PC-3 (cell line): ENCODE measurements at regions of chr12 and their contacts with region 1.

Region 1: DNA sequence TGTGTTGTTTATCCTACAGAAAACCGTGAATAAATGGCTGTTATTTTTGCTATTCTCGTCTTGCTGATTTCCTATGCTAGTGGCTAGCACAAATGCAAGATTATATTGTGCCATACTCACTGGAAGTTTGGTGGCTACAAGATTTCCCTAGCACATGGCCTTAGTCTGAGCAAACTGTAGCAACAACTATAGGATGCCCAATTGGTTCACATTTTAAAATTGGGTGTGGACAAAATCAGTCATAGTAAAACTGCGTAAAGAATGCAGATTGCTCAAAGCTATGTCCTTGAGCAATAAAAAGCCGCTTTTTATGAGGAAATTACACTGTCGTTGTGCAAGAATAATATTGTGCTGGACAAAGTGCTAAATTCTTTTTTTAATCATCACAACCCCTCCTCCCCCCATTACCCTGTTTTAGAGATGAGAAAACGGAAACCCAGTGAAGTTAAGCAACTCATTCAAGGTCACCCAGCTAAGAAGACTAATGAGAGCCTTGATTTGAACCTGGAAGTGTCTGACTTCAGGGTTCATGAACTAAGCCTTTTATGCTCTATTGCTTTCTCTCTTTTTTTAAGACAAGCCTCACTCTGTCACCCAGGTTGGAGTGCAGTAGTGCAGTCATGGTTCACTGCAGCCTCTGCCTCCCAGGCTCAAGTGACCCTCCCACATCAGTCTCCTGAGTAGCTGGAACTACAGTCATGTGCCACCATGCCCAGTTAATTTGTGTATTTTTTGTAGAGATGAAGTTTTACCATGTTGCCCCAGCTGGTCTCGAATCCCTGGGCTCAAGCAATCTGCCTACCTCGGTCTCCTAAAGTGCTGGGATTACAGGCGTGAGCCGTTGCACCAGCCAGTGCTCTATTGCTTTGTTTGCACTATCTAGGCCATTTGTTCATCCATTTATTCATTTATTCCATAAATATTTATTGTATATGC is 73.6 kb downstream of the SRGAP1 start:
- DNase-seq: peak; percentile 99
- ATAC-seq: peak; percentile 68
- H3K4me3 ChIP-seq: peak overlapping the region; percentile 55
- H3K27ac ChIP-seq: peak overlapping the region; percentile 99
- H3K4me1 ChIP-seq: peaks cover 74% of the 10 kb centered on the region
- H3K27me3 ChIP-seq: no peaks in the 10 kb centered on the region
- CTCF ChIP-seq: no peak

Region 2: DNA sequence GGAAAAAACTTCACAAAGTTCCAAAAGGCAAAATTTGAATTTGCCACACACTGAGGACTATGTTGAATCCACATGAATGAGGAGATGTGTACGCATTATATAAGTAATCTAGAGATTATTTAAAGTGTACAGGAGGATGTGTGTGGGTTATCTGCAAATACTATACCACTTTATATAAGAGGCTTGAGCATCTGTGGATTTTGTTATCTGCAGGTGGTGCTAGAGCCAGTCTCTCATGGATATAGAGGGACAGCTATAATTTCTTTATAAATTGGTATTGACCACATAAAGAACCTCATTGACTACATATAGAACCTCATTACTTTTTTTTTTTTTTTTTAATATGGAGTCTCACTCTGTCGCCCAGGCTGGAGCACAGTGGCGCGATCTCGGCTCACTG is 170.6 kb before region 1 on chr12:
- CTCF ChIA-PET with region 1: no interaction called
- POLR2A ChIA-PET with region 1: no interaction called
- intact Hi-C with region 1: no loop called
- DNase-seq: no peak
- ATAC-seq: no peak
- H3K4me3 ChIP-seq: no peak overlapping the region
- H3K27ac ChIP-seq: no peak overlapping the region
- H3K4me1 ChIP-seq: no peaks in the 10 kb centered on the region
- H3K27me3 ChIP-seq: peaks cover 6% of the 10 kb centered on the region; the same call in 1 of the 2 replicates
- CTCF ChIP-seq: no peak

Region 3: DNA sequence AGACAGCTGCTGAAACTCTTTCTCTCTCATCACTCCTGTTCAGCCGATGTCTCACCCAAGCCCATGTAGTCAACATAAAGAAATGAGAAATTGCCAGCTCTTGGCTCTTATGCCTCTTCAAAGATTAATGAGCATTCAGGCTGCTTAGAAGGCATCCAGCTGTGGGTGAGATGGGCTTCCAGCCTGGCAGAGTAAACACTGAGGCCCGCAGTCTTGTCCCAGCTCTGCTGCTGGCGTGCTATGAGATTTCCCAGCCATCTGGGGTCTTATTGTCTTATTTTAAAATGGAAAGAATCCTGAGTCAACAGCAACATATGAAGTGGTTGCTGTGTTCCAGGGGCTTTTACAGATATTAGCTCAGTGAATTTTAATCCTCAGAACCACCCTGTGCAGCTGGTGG is 125.8 kb before region 1 on chr12:
- CTCF ChIA-PET with region 1: no interaction called
- POLR2A ChIA-PET with region 1: no interaction called
- intact Hi-C with region 1: no loop called
- DNase-seq: no peak
- ATAC-seq: no peak
- H3K4me3 ChIP-seq: no peak overlapping the region
- H3K27ac ChIP-seq: no peak overlapping the region
- H3K4me1 ChIP-seq: no peaks in the 10 kb centered on the region
- H3K27me3 ChIP-seq: no peaks in the 10 kb centered on the region
- CTCF ChIP-seq: no peak

Region 4: GRCh38 chr12:63862214-63863107 is 55.7 kb before region 1 on chr12:
- CTCF ChIA-PET with region 1: no interaction called
- POLR2A ChIA-PET with region 1: no interaction called
- intact Hi-C with region 1: loop called (anchors 1 kb)
- DNase-seq: peak; percentile 96
- ATAC-seq: peak; percentile 87
- H3K4me3 ChIP-seq: peak overlapping the region; percentile 53
- H3K27ac ChIP-seq: peak overlapping the region; percentile 89
- H3K4me1 ChIP-seq: peaks cover 52% of the 10 kb centered on the region
- H3K27me3 ChIP-seq: no peaks in the 10 kb centered on the region
- CTCF ChIP-seq: no peak

Region 5: GRCh38 chr12:63978519-63978918 is 60.4 kb after region 1 on chr12:
- CTCF ChIA-PET with region 1: no interaction called
- POLR2A ChIA-PET with region 1: no interaction called
- intact Hi-C with region 1: loop called (anchors 2 kb)
- DNase-seq: peak; percentile 96
- ATAC-seq: peak; percentile 79
- H3K4me3 ChIP-seq: no peak overlapping the region
- H3K27ac ChIP-seq: peak overlapping the region; percentile 63
- H3K4me1 ChIP-seq: peaks cover 54% of the 10 kb centered on the region
- H3K27me3 ChIP-seq: no peaks in the 10 kb centered on the region
- CTCF ChIP-seq: no peak

Region 6: DNA sequence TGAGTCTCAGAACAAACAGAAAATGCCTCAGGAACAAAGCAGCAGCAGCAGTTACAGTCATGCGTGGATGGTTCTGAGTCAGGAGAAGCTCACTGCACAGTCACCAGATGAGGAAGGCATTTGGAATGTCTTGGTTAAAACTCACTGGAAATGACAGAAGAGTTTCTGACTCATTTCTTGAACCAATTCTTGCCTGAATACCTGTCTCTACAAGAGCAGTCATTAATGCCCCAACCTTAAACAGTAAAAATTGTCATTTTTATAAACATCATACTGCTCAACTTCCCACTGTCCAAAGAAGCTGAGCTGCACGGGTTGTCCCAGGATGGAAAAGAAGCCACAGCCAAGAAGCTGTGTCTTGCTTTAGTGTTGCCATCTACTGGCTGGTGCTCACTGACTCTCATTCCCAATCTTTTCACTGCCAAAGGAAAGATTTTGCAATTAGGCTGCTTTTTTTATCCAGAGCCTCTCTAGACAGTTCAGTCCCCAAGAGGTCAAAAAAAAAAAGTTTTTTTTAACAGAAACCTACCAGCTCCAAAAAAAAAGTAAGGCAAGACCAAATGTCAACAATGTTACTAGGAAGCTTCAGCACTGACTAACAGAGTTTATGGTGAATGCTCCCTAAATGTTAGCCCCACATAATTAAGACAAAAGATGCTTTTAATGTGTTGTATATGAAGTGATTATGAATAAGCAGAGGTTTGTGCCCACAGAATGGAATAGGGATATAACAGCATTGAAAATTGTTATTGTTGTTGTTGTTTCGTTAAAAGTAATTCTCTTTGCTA is 263.6 kb after region 1 on chr12:
- CTCF ChIA-PET with region 1: no interaction called
- POLR2A ChIA-PET with region 1: no interaction called
- intact Hi-C with region 1: loop called (anchors 1 kb)
- DNase-seq: peak; percentile 99
- ATAC-seq: peak; percentile 87
- H3K4me3 ChIP-seq: peak overlapping the region; percentile 44; the same call in 1 of the 2 replicates
- H3K27ac ChIP-seq: peak overlapping the region; percentile 99
- H3K4me1 ChIP-seq: peaks cover 60% of the 10 kb centered on the region
- H3K27me3 ChIP-seq: no peaks in the 10 kb centered on the region
- CTCF ChIP-seq: peak; percentile 77